ENCODE measurements at regions of chr15 and their contacts with region 1.

Region 1: GRCh38 chr15:69794645-69795461 is 302.9 kb downstream of the TLE3 start:
- DNase-seq: peak; percentile 42 to 86
- H3K4me3 ChIP-seq: peak overlapping the region in 1 of 2 donors; percentile 50
- H3K27ac ChIP-seq: peak overlapping the region; percentile 98 to 99
- H3K4me1 ChIP-seq: peaks cover 0 to 28% of the 10 kb centered on the region in 2 donors
- H3K27me3 ChIP-seq: no peaks in the 10 kb centered on the region
- CTCF ChIP-seq: no peak

Region 2: DNA sequence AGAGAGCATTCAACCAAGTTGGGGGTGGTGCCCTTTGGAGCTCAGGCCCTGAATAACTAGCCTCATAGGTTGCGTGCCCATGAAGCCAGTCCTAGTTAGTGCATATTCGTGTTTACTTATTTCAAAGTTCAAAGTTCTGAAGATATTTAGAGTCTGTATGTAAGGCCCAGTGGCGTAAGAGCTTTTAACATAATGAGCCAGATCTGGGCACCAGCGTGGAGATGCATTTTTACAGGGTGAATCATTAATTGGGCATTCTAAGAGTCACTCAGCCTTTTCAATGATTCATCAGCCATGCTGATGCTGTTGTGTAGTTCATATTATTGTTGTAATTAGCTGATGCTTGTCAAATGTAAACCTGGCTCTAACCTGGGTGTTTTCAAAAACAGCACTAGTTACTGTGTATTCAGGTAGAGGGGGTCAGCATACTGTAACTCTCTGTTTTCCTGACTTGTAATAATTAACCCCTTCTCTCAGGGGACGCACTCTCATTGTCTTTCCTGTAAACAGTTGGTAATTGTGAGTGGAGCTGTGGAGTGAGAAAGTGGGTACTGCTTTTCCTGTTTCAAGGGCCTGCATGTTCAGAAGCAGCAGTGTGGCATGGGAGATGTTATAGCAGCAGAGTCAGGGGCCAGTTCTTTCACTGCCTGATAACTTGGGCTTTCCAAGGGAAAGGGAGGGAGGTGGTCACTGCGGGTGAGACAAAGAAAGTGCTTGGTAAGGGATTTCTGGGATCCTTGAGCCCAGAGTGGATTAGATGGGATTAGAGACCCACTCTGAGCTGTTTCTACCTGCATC is 237.3 kb before region 1 on chr15:
- intact Hi-C with region 1: loop called (anchors 10 kb)
- DNase-seq: peak in 1 of 2 donors; percentile 83
- H3K4me3 ChIP-seq: no peak overlapping the region
- H3K27ac ChIP-seq: peak overlapping the region; percentile 46 to 64
- H3K4me1 ChIP-seq: peaks cover 4 to 13% of the 10 kb centered on the region in 2 donors
- H3K27me3 ChIP-seq: no peaks in the 10 kb centered on the region
- CTCF ChIP-seq: no peak

Region 3: DNA sequence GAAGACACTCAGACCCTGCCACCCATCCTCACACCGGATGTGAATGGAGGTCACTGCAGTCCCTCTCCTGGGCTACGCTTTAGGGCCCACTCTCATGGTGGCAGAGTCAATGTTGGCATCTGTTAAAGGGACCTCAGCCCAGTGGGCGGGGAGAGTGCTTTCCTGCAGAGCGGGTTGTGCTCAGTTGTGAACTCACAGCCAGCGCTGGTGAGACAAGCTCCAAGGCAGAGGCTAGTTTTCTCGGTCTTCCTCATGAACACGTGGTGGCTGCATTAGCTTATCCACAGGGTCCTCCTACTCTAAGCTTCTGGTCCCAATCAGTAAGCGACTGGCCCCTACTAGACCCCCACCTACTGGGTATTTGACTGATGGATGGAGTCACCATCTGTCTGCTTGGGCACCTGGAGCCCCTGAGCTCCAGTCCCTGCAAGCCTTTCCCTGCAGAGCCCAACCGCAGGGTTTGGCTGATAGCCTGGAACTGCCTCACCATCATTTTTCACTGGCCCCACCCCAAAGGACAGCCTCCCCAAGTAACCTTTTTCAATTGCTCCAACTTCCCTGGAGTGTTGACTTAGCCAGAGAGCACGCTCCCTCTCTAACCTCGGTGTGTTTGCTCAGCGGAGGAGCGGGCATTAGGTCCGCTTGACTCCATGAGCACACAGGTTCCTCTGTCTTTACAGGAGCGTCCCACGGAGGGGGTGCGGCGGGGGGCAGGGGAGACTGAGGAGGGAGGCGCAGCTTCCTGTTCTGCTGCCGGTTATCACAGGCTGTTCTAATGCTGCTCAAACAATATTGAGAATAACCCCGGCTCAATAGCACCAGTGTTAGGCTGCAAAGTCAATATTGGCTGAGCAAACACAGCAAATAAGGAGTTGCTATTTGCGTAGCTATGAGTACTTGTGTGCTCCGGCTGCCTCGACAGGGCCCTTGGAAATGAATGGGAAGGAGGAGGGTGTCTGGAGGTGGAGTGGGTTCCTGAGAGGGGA is 200.6 kb before region 1 on chr15:
- intact Hi-C with region 1: loop called (anchors 5 kb)
- DNase-seq: peak; percentile 58 to 89
- H3K4me3 ChIP-seq: peak overlapping the region; percentile 18 to 43
- H3K27ac ChIP-seq: peak overlapping the region; percentile 87 to 91
- H3K4me1 ChIP-seq: peaks cover 18 to 38% of the 10 kb centered on the region in 2 donors
- H3K27me3 ChIP-seq: no peaks in the 10 kb centered on the region
- CTCF ChIP-seq: no peak

Region 4: GRCh38 chr15:69760890-69761568 is 33.8 kb before region 1 on chr15:
- intact Hi-C with region 1: loop called (anchors 2 kb)
- DNase-seq: peak; percentile 74 to 91
- H3K4me3 ChIP-seq: no peak overlapping the region
- H3K27ac ChIP-seq: peak overlapping the region; percentile 22 to 42
- H3K4me1 ChIP-seq: peaks cover 0 to 5% of the 10 kb centered on the region in 2 donors
- H3K27me3 ChIP-seq: no peaks in the 10 kb centered on the region
- CTCF ChIP-seq: no peak

Region 5: GRCh38 chr15:69848500-69849231 is 53.8 kb after region 1 on chr15:
- intact Hi-C with region 1: no loop called
- DNase-seq: no peak
- H3K4me3 ChIP-seq: no peak overlapping the region
- H3K27ac ChIP-seq: no peak overlapping the region
- H3K4me1 ChIP-seq: no peaks in the 10 kb centered on the region
- H3K27me3 ChIP-seq: no peaks in the 10 kb centered on the region
- CTCF ChIP-seq: no peak

Region 6: GRCh38 chr15:70474471-70475396 is 679.9 kb after region 1 on chr15:
- intact Hi-C with region 1: loop called (anchors 1 kb)
- DNase-seq: peak; percentile 79 to 97
- H3K4me3 ChIP-seq: peak overlapping the region; percentile 16 to 48
- H3K27ac ChIP-seq: peak overlapping the region; percentile 91
- H3K4me1 ChIP-seq: peaks cover 11 to 16% of the 10 kb centered on the region in 2 donors
- H3K27me3 ChIP-seq: no peaks in the 10 kb centered on the region
- CTCF ChIP-seq: no peak

Measured in ascending aorta (tissue), 2 donors.